GM12878 (cell line): ENCODE measurements at regions of chr4 and their contacts with region 1.

Region 1: GRCh38 chr4:25993395-25994185 is 79.6 kb downstream of the SMIM20 start:
- DNase-seq: no peak
- ATAC-seq: peak; percentile 87
- H3K4me3 ChIP-seq: no peak overlapping the region
- H3K27ac ChIP-seq: no peak overlapping the region
- H3K4me1 ChIP-seq: 0 out of 2 replicates have a peak, but pooled peaks cover 5% of the 10 kb centered on the region
- H3K27me3 ChIP-seq: no peaks in the 10 kb centered on the region
- CTCF ChIP-seq: peak; percentile 28 to 41 (median 35); a peak in 5 of 6 replicates
- EP300 ChIP-seq: no peak
- POLR2A ChIP-seq: no peak
- RAD21 ChIP-seq: peak; percentile 52

Region 2: DNA sequence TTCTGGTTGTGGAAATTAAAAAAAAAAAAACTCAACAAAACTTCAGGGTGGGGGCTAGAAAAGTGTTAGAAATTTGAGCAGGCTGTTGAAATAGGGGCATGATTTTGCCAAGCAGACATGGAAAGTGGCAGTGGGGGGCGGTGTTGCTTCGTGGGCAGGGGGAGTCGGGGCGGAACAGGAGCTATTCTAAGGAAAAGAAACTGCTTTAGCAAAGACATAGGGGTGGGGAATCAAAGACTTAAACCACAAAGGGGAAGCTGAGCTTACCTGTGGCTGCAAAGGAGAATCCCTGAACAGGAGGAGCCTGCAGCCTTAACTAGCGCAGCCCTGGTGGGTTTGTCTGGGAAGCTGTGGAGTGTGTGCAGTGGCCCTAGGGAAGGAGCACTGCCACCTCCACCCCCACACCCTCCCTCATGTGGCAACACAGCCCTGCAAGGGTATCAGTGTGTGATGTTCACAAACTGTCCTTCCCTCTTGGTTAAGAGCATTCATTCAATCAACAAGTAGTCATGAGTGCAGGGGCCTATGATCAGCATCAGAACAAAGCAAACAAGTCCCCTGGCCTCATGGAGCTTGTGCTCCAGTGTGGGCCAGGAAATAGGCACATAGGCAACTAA is 151.3 kb before region 1 on chr4:
- CTCF ChIA-PET with region 1: interaction called, 17 read pairs
- POLR2A ChIA-PET with region 1: no interaction called
- RAD21 ChIA-PET with region 1: interaction called, 20 read pairs
- SMC1A ChIA-PET with region 1: interaction called, 11 read pairs
- in situ Hi-C with region 1: no loop called
- intact Hi-C with region 1: loop called (anchors 2 kb)
- DNase-seq: peak; percentile 21
- ATAC-seq: peak; percentile 80
- H3K4me3 ChIP-seq: no peak overlapping the region
- H3K27ac ChIP-seq: no peak overlapping the region
- H3K4me1 ChIP-seq: peaks cover 31% of the 10 kb centered on the region
- H3K27me3 ChIP-seq: no peaks in the 10 kb centered on the region
- CTCF ChIP-seq: peak; percentile 43 to 53 (median 47); a peak in 5 of 6 replicates
- EP300 ChIP-seq: no peak
- POLR2A ChIP-seq: no peak
- RAD21 ChIP-seq: peak; percentile 85

Region 3: DNA sequence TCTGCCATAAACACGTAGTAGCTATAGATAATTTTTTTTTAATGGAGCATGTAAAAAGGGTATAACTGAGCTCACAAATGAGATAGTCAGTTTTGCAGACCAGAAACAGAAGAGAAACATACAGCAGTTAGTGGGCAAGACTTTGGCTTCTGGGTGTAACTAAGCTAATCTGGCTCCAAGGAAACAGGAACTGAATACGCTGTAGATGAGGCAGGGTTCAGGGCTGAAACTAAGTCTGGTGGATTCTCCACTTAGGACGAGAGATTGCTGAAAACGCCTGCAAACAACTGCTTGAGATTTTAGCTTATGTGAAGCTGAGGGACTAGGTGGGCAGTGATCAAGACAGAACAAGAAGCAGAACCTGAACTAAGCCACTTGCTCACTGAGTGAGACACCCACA is 12.2 kb after region 1 on chr4:
- CTCF ChIA-PET with region 1: interaction called, 23 read pairs
- POLR2A ChIA-PET with region 1: no interaction called
- RAD21 ChIA-PET with region 1: interaction called, 3 read pairs
- SMC1A ChIA-PET with region 1: interaction called, 4 read pairs
- in situ Hi-C with region 1: no loop called
- intact Hi-C with region 1: no loop called
- DNase-seq: no peak
- ATAC-seq: no peak
- H3K4me3 ChIP-seq: no peak overlapping the region
- H3K27ac ChIP-seq: no peak overlapping the region
- H3K4me1 ChIP-seq: no peaks in the 10 kb centered on the region
- H3K27me3 ChIP-seq: no peaks in the 10 kb centered on the region
- CTCF ChIP-seq: no peak
- EP300 ChIP-seq: no peak
- POLR2A ChIP-seq: no peak
- RAD21 ChIP-seq: no peak